ENCODE measurements at regions of chr7 and their contacts with region 1.

Region 1: GRCh38 chr7:44797329-44798251 is 1.1 kb downstream of the PPIA start:
- DNase-seq: peak; percentile 80 to 88 (median 85)
- H3K4me3 ChIP-seq: peak overlapping the region; percentile 79
- H3K27ac ChIP-seq: peak overlapping the region; percentile 93 to 95
- H3K4me1 ChIP-seq: peaks cover 3% of the 10 kb centered on the region
- H3K27me3 ChIP-seq: no peaks in the 10 kb centered on the region
- CTCF ChIP-seq: peak in 1 of 3 donors; percentile 36
- EP300 ChIP-seq: no peak
- POLR2A ChIP-seq: peak; percentile 36

Region 2: GRCh38 chr7:44761207-44762161 is 36.1 kb before region 1 on chr7:
- intact Hi-C with region 1: loop called in 1 of 4 experiments (anchors 5 kb)
- DNase-seq: peak; percentile 62 to 81 (median 68)
- H3K4me3 ChIP-seq: no peak overlapping the region
- H3K27ac ChIP-seq: peak overlapping the region in 1 of 2 donors; percentile 53
- H3K4me1 ChIP-seq: peaks cover 2% of the 10 kb centered on the region
- H3K27me3 ChIP-seq: no peaks in the 10 kb centered on the region
- CTCF ChIP-seq: no peak
- EP300 ChIP-seq: no peak
- POLR2A ChIP-seq: no peak

Region 3: DNA sequence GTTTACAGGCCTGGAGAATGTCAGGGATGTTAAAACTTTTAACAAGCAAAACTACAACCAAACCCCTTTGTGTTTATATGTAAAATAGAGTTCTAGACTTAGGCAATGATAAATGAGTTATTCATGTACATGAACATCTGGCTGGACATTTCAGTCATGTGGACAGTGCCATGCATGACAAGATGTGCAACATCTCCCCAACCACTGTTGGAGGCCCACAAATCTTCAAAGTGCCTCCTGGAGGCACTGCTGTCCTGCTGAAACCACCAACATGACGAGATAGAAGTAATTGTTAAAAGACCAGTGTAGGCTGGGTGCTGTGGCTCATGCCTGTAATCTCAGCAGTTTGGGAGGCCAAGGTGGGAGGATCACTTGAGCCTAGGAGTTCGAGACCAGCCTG is 17.3 kb after region 1 on chr7:
- intact Hi-C with region 1: no loop called
- DNase-seq: no peak
- H3K4me3 ChIP-seq: no peak overlapping the region
- H3K27ac ChIP-seq: no peak overlapping the region
- H3K4me1 ChIP-seq: no peaks in the 10 kb centered on the region
- H3K27me3 ChIP-seq: no peaks in the 10 kb centered on the region
- CTCF ChIP-seq: no peak
- EP300 ChIP-seq: no peak
- POLR2A ChIP-seq: no peak

Measured in ovary (tissue), 10 donors.